Dorsolateral prefrontal cortex (tissue), 120 donors: ENCODE measurements at regions of chr7 and their contacts with region 1.

Region 1: GRCh38 chr7:29749701-29750321 is 56.5 kb upstream of the WIPF3 start:
- DNase-seq: peak in 2 of 10 donors; percentile 18 to 42
- H3K4me3 ChIP-seq: no peak overlapping the region
- H3K27ac ChIP-seq: peak overlapping the region in 17 of 59 donors; percentile 6 to 74 (median 36)
- H3K27me3 ChIP-seq: no peaks in the 10 kb centered on the region
- CTCF ChIP-seq: no peak

Region 2: DNA sequence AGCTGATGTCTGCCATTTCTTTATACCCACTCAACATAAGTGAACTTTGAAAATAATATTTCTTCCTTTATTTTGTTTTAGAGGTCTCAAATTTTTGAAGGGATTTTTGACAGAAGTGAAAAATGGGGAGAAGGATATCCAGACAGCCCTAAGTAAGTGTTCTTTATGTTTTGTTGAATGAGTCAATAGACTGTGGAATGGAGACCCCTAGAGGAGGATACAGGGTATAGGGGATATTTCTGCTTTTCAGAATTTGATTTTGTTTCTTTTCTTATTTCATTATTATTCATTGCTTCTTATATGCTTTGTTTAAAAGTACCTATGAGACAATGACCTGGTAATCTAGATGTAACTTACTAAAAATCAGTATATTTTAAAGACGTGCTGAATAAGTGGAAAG is 312.8 kb after region 1 on chr7:
- intact Hi-C with region 1: loop called (anchors 5 to 10 kb)
- DNase-seq: no peak
- H3K4me3 ChIP-seq: no peak overlapping the region
- H3K27ac ChIP-seq: no peak overlapping the region
- H3K27me3 ChIP-seq: no peaks in the 10 kb centered on the region
- CTCF ChIP-seq: peak; percentile 38 to 87 (median 74)